H1 (cell line): ENCODE measurements at regions of chr10 and their contacts with region 1.

Region 1: GRCh38 chr10:43315535-43316207 is 48.8 kb upstream of the RASGEF1A start:
- DNase-seq: no peak
- H3K4me3 ChIP-seq: no peak overlapping the region
- H3K27ac ChIP-seq: no peak overlapping the region
- H3K4me1 ChIP-seq: peaks cover 0 to 3% (median 1%) of the 10 kb centered on the region in 4 experiments; a peak in 2 of 7 replicates
- H3K27me3 ChIP-seq: no peaks in the 10 kb centered on the region
- CTCF ChIP-seq: peak in 1 of 3 experiments; percentile 6; a peak in 1 of 4 replicates
- EP300 ChIP-seq: no peak
- POLR2A ChIP-seq: no peak
- RAD21 ChIP-seq: peak in 1 of 2 experiments; percentile 31; a peak in 1 of 4 replicates

Region 2: DNA sequence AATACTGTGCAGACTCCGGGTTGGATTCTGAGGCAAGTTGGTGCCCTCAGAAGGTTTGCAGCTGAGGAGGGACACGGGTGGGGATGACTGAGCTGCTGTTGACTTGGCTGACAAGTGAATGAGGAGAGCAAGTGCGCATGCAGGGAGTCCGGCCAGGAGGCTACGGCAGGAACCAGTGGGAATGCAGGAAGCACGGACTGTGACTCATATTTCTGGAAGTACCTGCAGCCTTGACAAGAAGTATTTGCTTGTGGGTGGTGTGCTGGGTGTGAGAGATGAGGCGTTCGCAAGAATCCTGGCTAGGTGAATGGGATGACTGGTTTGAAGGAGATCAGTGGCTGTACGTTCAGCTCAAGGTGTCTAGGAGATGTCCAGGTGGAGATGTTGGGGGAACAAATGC is 24.9 kb after region 1 on chr10:
- CTCF ChIA-PET with region 1: interaction called, 10 read pairs
- POLR2A ChIA-PET with region 1: no interaction called
- DNase-seq: no peak
- H3K4me3 ChIP-seq: no peak overlapping the region
- H3K27ac ChIP-seq: no peak overlapping the region
- H3K4me1 ChIP-seq: peaks cover 4 to 11% (median 7%) of the 10 kb centered on the region in 4 experiments
- H3K27me3 ChIP-seq: no peaks in the 10 kb centered on the region
- CTCF ChIP-seq: no peak
- EP300 ChIP-seq: no peak
- POLR2A ChIP-seq: no peak
- RAD21 ChIP-seq: no peak